ENCODE measurements at regions of chr5 and their contacts with region 1.

Region 1: GRCh38 chr5:137754126-137754960 is at the start of gene HNRNPA0:
- DNase-seq: peak; percentile 95
- ATAC-seq: peak; percentile 82
- H3K4me3 Mint-ChIP-seq: peak within 1 kb of the TSS; percentile 95
- H3K27ac Mint-ChIP-seq: peak within 1 kb of the TSS; percentile 100
- H3K4me1 Mint-ChIP-seq: peaks cover 35% of the 10 kb centered on the region
- H3K27me3 Mint-ChIP-seq: no peaks in the 10 kb centered on the region
- CTCF ChIP-seq: no peak
- total RNA-seq, gene HNRNPA0: 31.2 and 34.7 TPM in 2 replicates

Region 2: GRCh38 chr5:137252512-137252911 is 501.8 kb before region 1 on chr5:
- CTCF ChIA-PET with region 1: no interaction called
- POLR2A ChIA-PET with region 1: no interaction called
- intact Hi-C with region 1: no loop called
- DNase-seq: no peak
- ATAC-seq: no peak
- H3K4me3 Mint-ChIP-seq: no peak overlapping the region
- H3K27ac Mint-ChIP-seq: no peak overlapping the region
- H3K4me1 Mint-ChIP-seq: no peaks in the 10 kb centered on the region
- H3K27me3 Mint-ChIP-seq: peaks cover 1% of the 10 kb centered on the region
- CTCF ChIP-seq: no peak

Region 3: DNA sequence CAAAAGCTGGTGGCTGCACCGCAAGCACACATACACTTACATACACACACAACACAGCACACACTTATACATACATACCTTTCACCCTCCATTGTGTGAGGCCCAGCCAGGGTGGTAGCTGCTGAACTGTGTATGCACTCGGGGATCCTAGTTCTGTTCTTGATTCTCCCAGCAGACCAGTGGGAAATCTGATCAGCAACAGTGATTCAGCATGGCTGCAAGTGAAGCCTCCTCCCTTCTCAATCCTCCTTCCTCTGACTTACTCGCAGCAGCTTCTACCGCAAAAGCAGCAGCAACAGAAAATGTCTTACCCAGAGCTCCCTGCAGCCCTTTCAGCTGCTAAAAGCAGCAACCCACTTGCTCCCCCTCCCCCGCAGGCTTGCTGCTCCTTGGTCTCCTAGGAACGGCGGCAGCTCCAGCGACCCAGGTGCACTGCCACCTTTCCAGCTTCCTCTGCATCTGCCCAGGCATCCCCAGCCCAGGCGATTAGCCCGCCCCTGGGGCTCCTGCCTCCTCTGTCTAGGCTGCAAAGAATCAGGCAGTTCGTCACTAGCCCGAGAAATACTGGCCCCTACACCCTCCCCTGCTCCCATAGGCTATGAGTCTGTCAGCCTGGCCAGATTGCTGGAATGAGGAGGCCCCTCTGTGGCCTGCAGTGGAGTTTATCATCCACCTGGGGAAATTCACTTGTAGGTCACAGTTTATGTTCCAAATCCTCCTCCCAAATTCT is 18.6 kb before region 1 on chr5 and contains the start of gene KLHL3:
- CTCF ChIA-PET with region 1: interaction called, 12 read pairs
- POLR2A ChIA-PET with region 1: interaction called, 13 read pairs
- intact Hi-C with region 1: no loop called
- DNase-seq: peak; percentile 15
- ATAC-seq: peak; percentile 47
- H3K4me3 Mint-ChIP-seq: no peak within 1 kb of the TSS
- H3K27ac Mint-ChIP-seq: no peak within 1 kb of the TSS
- H3K4me1 Mint-ChIP-seq: no peaks in the 10 kb centered on the region
- H3K27me3 Mint-ChIP-seq: peaks cover 2% of the 10 kb centered on the region
- CTCF ChIP-seq: no peak
- total RNA-seq, gene KLHL3: 5.3 and 5.9 TPM in 2 replicates

Region 4: DNA sequence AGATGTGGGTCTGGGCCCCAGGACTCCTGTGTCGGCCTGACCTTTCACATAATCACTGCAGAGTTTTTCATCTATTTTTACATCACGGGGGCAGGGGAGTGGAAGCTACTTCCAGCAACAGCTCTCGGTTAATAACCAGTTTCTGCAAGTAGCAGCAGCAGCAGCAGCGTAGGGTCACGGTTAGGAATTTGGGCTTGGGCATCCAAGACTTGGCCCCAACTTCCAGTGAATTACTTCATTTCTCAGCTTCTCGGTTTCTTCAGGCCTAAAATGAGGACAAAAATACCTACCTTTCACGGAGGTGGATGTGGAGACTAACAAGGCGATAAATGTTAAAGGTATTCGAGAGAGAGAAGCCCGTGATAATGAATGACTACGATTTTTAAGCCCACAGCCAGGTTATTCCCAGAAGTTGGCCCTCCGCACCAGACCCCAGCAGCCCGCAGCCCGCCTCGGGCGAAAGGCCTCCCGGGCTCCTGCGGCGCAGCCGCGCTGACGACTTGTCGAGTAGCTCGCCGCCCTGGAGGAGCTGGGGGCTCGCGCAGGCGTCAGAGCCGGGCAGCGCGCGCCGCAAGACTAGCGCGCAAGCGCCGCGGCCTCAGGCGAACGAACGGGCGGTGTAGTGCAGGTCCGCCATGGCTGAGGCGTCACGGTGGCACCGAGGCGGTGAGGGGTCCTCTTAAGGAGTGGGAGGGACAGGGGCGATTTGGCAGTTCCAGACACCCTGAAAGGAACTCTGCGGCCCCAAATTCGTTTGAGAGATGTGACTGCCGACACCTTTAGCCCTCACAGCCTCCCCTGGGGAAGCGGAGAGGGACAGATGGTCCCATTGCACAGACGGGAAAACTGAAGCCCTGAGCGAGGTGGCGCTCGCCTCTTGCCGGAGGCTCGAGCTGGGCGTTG is 134.8 kb after region 1 on chr5 and contains the start of gene PKD2L2:
- CTCF ChIA-PET with region 1: interaction called, 4 read pairs
- POLR2A ChIA-PET with region 1: interaction called, 23 read pairs
- intact Hi-C with region 1: loop called (anchors 1 kb)
- DNase-seq: peak; percentile 84
- ATAC-seq: peak; percentile 98
- H3K4me3 Mint-ChIP-seq: peak within 1 kb of the TSS; percentile 92
- H3K27ac Mint-ChIP-seq: peak within 1 kb of the TSS; percentile 96
- H3K4me1 Mint-ChIP-seq: peaks cover 32% of the 10 kb centered on the region
- H3K27me3 Mint-ChIP-seq: no peaks in the 10 kb centered on the region
- CTCF ChIP-seq: no peak
- total RNA-seq, gene PKD2L2: not detected in 2 replicates

Region 5: GRCh38 chr5:137960141-137960540 is 205.8 kb after region 1 on chr5:
- CTCF ChIA-PET with region 1: no interaction called
- POLR2A ChIA-PET with region 1: no interaction called
- intact Hi-C with region 1: no loop called
- DNase-seq: no peak
- ATAC-seq: no peak
- H3K4me3 Mint-ChIP-seq: no peak overlapping the region
- H3K27ac Mint-ChIP-seq: peak overlapping the region; percentile 24
- H3K4me1 Mint-ChIP-seq: no peaks in the 10 kb centered on the region
- H3K27me3 Mint-ChIP-seq: no peaks in the 10 kb centered on the region
- CTCF ChIP-seq: no peak

Region 6: DNA sequence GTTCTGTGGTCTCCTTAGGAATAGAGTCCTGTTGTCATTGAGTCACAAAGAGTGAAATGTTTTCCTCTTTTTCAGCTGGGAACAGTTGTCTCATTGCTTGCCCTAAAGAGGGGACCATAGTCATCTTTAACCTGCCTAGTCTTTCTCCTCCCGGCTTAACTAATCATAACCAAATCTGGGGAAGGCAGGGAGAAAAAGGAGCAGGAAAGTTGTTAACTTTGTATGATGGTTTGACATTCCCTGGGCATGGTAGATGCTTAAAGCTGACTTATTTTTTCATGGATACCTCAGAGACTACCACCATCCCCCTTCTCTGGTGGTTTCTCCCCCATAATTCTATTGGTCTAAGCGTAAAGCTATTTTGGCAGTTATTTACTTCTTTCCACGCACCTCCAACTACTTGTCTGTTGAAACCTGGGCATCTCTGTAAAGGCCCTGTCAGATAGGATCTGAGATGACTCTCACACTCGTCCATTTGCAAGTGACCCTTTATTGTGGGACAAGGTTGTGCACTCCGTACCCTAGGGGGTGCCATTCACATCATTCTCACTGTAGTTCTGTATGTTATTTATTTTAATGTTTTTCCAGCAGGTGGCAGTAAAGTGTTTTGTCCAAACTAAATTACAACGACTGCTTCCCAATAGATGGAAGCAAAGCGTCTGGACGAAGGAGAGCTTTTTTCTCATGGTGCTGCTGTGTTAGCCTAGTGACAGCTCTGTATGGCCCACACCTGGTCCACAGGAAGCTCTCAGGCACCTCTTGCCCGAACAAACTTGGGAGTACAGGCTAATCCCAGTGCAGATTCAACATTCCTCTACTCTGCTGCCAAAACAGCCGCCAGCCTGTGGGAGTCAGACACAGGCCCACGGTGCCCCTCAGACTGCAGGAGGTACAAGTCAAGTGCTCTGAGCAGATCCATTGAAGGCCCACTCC is 281.5 kb after region 1 on chr5:
- CTCF ChIA-PET with region 1: interaction called, 4 read pairs
- POLR2A ChIA-PET with region 1: interaction called, 3 read pairs
- intact Hi-C with region 1: loop called (anchors 1 kb)
- DNase-seq: no peak
- ATAC-seq: peak; percentile 44
- H3K4me3 Mint-ChIP-seq: peak overlapping the region; percentile 48
- H3K27ac Mint-ChIP-seq: peak overlapping the region; percentile 21
- H3K4me1 Mint-ChIP-seq: peaks cover 34% of the 10 kb centered on the region
- H3K27me3 Mint-ChIP-seq: no peaks in the 10 kb centered on the region
- CTCF ChIP-seq: peak; percentile 72

Region 7: DNA sequence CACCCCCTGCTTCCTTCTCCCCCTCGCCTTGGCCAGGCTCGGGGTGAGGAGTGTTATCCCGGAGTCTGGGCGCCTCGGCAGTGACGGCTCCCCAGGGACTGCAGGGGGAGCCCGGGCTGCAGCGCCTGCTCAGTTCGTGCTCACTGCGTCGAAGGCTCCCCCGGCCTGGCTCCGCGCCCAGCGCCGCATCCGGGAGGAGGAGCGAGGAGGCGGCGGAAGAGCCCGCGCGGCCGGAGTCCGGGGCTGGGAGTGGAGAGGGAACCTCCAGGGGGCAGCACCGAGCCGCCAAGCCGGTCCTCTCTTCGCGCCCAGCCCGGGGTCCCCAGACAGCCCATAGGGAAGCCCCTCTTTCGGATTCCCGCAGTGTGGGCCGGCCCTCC is 709.7 kb after region 1 on chr5:
- CTCF ChIA-PET with region 1: no interaction called
- POLR2A ChIA-PET with region 1: no interaction called
- intact Hi-C with region 1: loop called (anchors 1 kb)
- DNase-seq: peak; percentile 92
- ATAC-seq: peak; percentile 56
- H3K4me3 Mint-ChIP-seq: peak overlapping the region; percentile 89
- H3K27ac Mint-ChIP-seq: peak overlapping the region; percentile 92
- H3K4me1 Mint-ChIP-seq: peaks cover 49% of the 10 kb centered on the region
- H3K27me3 Mint-ChIP-seq: no peaks in the 10 kb centered on the region
- CTCF ChIP-seq: peak; percentile 87

Measured in activated B cell treated with CpG ODN at 0.5 μM for 24 hours (primary cell).